Activated naive CD4-positive, alpha-beta T cell treated with anti-CD3 and anti-CD28 coated beads for 36 hours (primary cell): ENCODE measurements at regions of chr3 and their contacts with region 1.

Region 1: GRCh38 chr3:98522244-98523090 is at the start of gene CLDND1:
- DNase-seq: peak; percentile 96
- H3K4me3 Mint-ChIP-seq: peak within 1 kb of the TSS; percentile 89
- H3K27ac Mint-ChIP-seq: peak within 1 kb of the TSS; percentile 93
- H3K4me1 Mint-ChIP-seq: peaks cover 43% of the 10 kb centered on the region
- H3K27me3 Mint-ChIP-seq: no peaks in the 10 kb centered on the region
- total RNA-seq, gene CLDND1: 91.7 to 94.6 TPM

Region 2: GRCh38 chr3:97764407-97765238 is 757.8 kb before region 1 on chr3 and contains the start of gene ARL6:
- CTCF ChIA-PET with region 1: no interaction called
- intact Hi-C with region 1: loop called (anchors 1 kb)
- DNase-seq: peak; percentile 81
- H3K4me3 Mint-ChIP-seq: peak within 1 kb of the TSS; percentile 94
- H3K27ac Mint-ChIP-seq: peak within 1 kb of the TSS; percentile 92
- H3K4me1 Mint-ChIP-seq: peaks cover 21% of the 10 kb centered on the region
- H3K27me3 Mint-ChIP-seq: no peaks in the 10 kb centered on the region
- total RNA-seq, gene ARL6: 3.0 to 4.7 TPM

Region 3: DNA sequence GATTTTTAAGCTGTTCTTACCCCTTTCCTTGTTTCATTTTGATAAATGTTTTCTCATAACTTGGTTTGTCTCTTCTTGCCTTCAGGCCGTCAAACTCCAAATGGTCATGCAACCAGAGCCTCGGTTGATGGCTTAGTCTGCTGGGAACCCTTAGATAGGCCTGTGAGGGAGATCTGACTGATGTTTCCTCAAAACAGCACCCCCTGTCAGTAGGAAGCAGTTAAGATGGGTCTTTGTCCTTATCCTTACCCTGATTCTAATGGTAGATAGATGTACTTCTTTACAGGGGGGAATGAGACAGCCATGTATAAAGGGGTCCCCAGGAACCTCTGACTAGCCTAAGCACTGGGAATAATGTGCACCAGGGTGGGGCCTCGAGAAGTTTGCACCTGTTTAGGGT is 408.2 kb before region 1 on chr3:
- CTCF ChIA-PET with region 1: no interaction called
- intact Hi-C with region 1: no loop called
- DNase-seq: no peak
- H3K4me3 Mint-ChIP-seq: no peak overlapping the region
- H3K27ac Mint-ChIP-seq: no peak overlapping the region
- H3K4me1 Mint-ChIP-seq: no peaks in the 10 kb centered on the region
- H3K27me3 Mint-ChIP-seq: peaks cover 6% of the 10 kb centered on the region

Region 4: DNA sequence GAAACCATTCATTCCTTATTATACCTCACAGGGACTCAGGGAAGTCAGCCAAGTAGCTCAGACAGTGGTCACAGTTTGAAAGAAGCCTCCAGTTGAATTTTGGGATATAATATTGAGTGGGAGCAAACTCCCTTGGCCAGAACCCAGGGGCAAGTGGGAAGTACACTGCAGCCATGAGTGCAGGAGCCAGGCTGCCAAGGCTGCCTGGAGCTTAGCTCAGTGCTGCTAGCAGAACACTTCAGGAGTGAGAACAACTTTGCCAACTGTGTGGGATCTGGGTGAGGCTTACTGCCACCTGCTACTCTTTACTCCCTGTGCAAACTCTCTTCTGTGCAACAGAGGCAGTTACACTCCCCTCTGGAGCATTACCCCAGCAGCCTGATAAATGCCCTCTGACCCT is 127.4 kb before region 1 on chr3:
- CTCF ChIA-PET with region 1: no interaction called
- intact Hi-C with region 1: no loop called
- DNase-seq: no peak
- H3K4me3 Mint-ChIP-seq: no peak overlapping the region
- H3K27ac Mint-ChIP-seq: no peak overlapping the region
- H3K4me1 Mint-ChIP-seq: no peaks in the 10 kb centered on the region
- H3K27me3 Mint-ChIP-seq: peaks cover 19% of the 10 kb centered on the region

Region 5: GRCh38 chr3:98536456-98537017 is 14.1 kb after region 1 on chr3:
- CTCF ChIA-PET with region 1: interaction called, 4 read pairs
- intact Hi-C with region 1: loop called (anchors 1 kb)
- DNase-seq: peak; percentile 14
- H3K4me3 Mint-ChIP-seq: peak overlapping the region; percentile 21
- H3K27ac Mint-ChIP-seq: peak overlapping the region; percentile 50
- H3K4me1 Mint-ChIP-seq: peaks cover 24% of the 10 kb centered on the region
- H3K27me3 Mint-ChIP-seq: peaks cover 6% of the 10 kb centered on the region

Region 6: GRCh38 chr3:98548544-98548943 is 26.1 kb after region 1 on chr3:
- CTCF ChIA-PET with region 1: no interaction called
- intact Hi-C with region 1: no loop called
- DNase-seq: no peak
- H3K4me3 Mint-ChIP-seq: no peak overlapping the region
- H3K27ac Mint-ChIP-seq: no peak overlapping the region
- H3K4me1 Mint-ChIP-seq: peaks cover 25% of the 10 kb centered on the region
- H3K27me3 Mint-ChIP-seq: peaks cover 2% of the 10 kb centered on the region

Region 7: GRCh38 chr3:98564282-98565005 is 42.0 kb after region 1 on chr3:
- CTCF ChIA-PET with region 1: interaction called, 3 read pairs
- intact Hi-C with region 1: loop called (anchors 1 kb)
- DNase-seq: no peak
- H3K4me3 Mint-ChIP-seq: no peak overlapping the region
- H3K27ac Mint-ChIP-seq: no peak overlapping the region
- H3K4me1 Mint-ChIP-seq: peaks cover 63% of the 10 kb centered on the region
- H3K27me3 Mint-ChIP-seq: no peaks in the 10 kb centered on the region

Region 8: DNA sequence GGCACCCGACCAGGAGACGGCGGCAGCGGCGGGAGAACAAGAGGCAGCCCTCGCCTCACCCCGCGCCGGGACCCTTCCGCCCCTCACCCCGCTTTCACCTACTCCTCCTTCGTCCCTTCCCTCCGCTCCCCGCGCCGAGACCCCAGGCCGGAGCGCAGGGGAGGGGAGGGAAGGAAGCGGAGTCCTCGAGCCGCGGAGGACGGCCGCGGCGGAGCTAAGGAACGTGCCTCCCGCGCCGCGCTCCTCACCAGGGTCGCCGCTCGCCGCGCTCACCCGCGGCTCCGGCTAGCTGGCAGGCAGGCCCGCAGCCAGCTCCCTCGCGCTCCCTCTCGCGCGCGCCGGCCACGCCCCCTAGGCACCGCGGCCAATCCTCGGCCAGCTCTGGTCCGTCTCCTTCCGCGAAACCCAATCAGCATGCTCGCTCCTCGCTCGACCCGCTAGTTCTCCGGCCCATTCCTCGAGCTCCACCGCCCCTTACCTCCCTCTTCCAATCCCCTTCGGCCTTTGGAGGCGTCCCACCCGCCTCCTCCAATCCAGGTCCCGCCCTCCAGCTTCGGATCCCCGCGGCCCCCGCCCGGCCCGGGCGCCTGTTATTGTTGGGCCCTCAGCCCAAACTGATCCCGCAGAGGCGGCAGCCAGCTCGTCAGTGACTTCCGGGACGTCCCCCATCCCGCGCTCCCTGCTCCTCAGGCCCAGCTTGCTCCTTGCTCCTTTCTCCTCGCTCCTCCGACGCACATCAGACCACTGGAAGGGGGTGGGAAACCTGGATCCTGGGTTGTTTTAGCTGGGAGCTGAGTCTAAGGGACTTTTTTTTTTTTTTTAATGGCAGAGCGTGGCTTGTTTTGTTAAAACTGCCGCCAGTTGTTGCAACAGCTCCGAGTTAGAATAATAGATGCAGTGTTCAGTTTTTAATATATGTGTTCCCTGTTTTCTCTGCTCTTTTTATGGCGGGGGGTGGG is 379.2 kb after region 1 on chr3 and contains the start of gene DCBLD2:
- CTCF ChIA-PET with region 1: no interaction called
- intact Hi-C with region 1: loop called (anchors 1 kb)
- DNase-seq: peak; percentile 95
- H3K4me3 Mint-ChIP-seq: peak within 1 kb of the TSS; percentile 83
- H3K27ac Mint-ChIP-seq: peak within 1 kb of the TSS; percentile 28
- H3K4me1 Mint-ChIP-seq: peaks cover 12% of the 10 kb centered on the region
- H3K27me3 Mint-ChIP-seq: peaks cover 2% of the 10 kb centered on the region
- total RNA-seq, gene DCBLD2: 1.3 to 2.1 TPM

Region 9: GRCh38 chr3:99250272-99250671 is 727.8 kb after region 1 on chr3:
- CTCF ChIA-PET with region 1: no interaction called
- intact Hi-C with region 1: no loop called
- DNase-seq: no peak
- H3K4me3 Mint-ChIP-seq: no peak overlapping the region
- H3K27ac Mint-ChIP-seq: no peak overlapping the region
- H3K4me1 Mint-ChIP-seq: no peaks in the 10 kb centered on the region
- H3K27me3 Mint-ChIP-seq: no peaks in the 10 kb centered on the region

Region 10: GRCh38 chr3:100260685-100261484 is 1738.4 kb after region 1 on chr3 and contains the start of gene TBC1D23:
- CTCF ChIA-PET with region 1: no interaction called
- intact Hi-C with region 1: loop called (anchors 10 kb)
- DNase-seq: peak; percentile 98
- H3K4me3 Mint-ChIP-seq: peak within 1 kb of the TSS; percentile 86
- H3K27ac Mint-ChIP-seq: peak within 1 kb of the TSS; percentile 89
- H3K4me1 Mint-ChIP-seq: peaks cover 59% of the 10 kb centered on the region
- H3K27me3 Mint-ChIP-seq: no peaks in the 10 kb centered on the region
- total RNA-seq, gene TBC1D23: 14.1 to 15.8 TPM